Mammary epithelial cell (primary cell): ENCODE measurements at regions of chr20 and their contacts with region 1.

Region 1: GRCh38 chr20:34915749-34916455 is 39.5 kb downstream of the ACSS2 start:
- DNase-seq: no peak
- H3K4me3 ChIP-seq: no peak overlapping the region
- H3K27ac ChIP-seq: no peak overlapping the region
- H3K4me1 ChIP-seq: peaks cover 7% of the 10 kb centered on the region
- H3K27me3 ChIP-seq: no peaks in the 10 kb centered on the region
- CTCF ChIP-seq: no peak

Region 2: GRCh38 chr20:34861386-34862084 is 54.4 kb before region 1 on chr20:
- CTCF ChIA-PET with region 1: no interaction called
- dilution Hi-C with region 1: loop called (anchors 5 kb)
- in situ Hi-C with region 1: no loop called
- intact Hi-C with region 1: no loop called
- DNase-seq: no peak
- H3K4me3 ChIP-seq: no peak overlapping the region
- H3K27ac ChIP-seq: no peak overlapping the region
- H3K4me1 ChIP-seq: no peaks in the 10 kb centered on the region
- H3K27me3 ChIP-seq: no peaks in the 10 kb centered on the region
- CTCF ChIP-seq: no peak

Region 3: GRCh38 chr20:34955232-34956040 is 39.5 kb after region 1 on chr20 and contains the starts of genes GSS and MYH7B:
- CTCF ChIA-PET with region 1: no interaction called
- dilution Hi-C with region 1: loop called (anchors 5 kb)
- in situ Hi-C with region 1: no loop called
- intact Hi-C with region 1: no loop called
- DNase-seq: peak; percentile 95
- H3K4me3 ChIP-seq: peak within 1 kb of the TSS; percentile 68 to 83 (median 79)
- H3K27ac ChIP-seq: peak within 1 kb of the TSS; percentile 76
- H3K4me1 ChIP-seq: peaks cover 6% of the 10 kb centered on the region
- H3K27me3 ChIP-seq: no peaks in the 10 kb centered on the region
- CTCF ChIP-seq: peak; percentile 6 to 66
- total RNA-seq, gene GSS: 102 to 115 TPM
- total RNA-seq, gene MYH7B: under 0.01 to 0.28 TPM